Left cardiac atrium (tissue), 4 donors: ENCODE measurements at regions of chr14 and their contacts with region 1.

Region 1: GRCh38 chr14:31286456-31287293 is 79.1 kb upstream of the HECTD1 start:
- DNase-seq: no peak
- ATAC-seq: no peak

Region 2: DNA sequence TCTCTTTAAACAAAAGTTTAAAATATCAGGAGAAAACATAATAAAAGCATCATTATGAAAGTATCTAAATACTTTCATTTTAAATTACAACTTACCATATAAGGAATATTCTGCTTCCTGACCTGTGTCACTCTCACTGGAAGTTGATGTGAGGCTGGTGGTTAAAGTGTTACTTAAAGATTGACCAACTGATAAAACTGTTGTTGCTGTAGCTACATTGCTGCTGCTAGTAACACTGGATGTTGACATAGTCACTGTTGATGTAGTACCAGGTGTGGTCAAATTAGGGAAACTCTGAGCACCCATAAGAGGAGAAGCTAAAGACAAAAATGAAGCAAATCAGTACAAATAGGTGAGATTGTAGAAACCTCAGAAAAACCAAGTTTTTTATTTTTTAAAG is 159.0 kb before region 1 on chr14:
- intact Hi-C with region 1: no loop called
- DNase-seq: no peak
- ATAC-seq: peak in 1 of 2 donors; percentile 41

Region 3: GRCh38 chr14:31229638-31230229 is 56.9 kb before region 1 on chr14:
- intact Hi-C with region 1: loop called in 1 of 2 experiments (anchors 10 kb)
- DNase-seq: peak; percentile 78
- ATAC-seq: peak; percentile 98 to 100

Region 4: GRCh38 chr14:32507029-32507984 is 1220.6 kb after region 1 on chr14:
- intact Hi-C with region 1: no loop called
- DNase-seq: no peak
- ATAC-seq: peak in 1 of 2 donors; percentile 44